ENCODE measurements at regions of chr6 and their contacts with region 1.

Region 1: GRCh38 chr6:26285143-26286134 is 79.6 kb upstream of the BTN3A2 start:
- DNase-seq: peak; percentile 94 to 100
- H3K4me3 ChIP-seq: peak overlapping the region; percentile 74 to 95 (median 80)
- H3K27ac ChIP-seq: peak overlapping the region; percentile 96
- H3K4me1 ChIP-seq: peaks cover 0 to 7% (median 2%) of the 10 kb centered on the region in 4 experiments; a peak in 1 of 7 replicates
- H3K27me3 ChIP-seq: no peaks in the 10 kb centered on the region
- CTCF ChIP-seq: no peak
- EP300 ChIP-seq: peak in 1 of 2 experiments; percentile 97; a peak in 2 of 3 replicates
- POLR2A ChIP-seq: peak; percentile 100
- RAD21 ChIP-seq: no peak

Region 2: DNA sequence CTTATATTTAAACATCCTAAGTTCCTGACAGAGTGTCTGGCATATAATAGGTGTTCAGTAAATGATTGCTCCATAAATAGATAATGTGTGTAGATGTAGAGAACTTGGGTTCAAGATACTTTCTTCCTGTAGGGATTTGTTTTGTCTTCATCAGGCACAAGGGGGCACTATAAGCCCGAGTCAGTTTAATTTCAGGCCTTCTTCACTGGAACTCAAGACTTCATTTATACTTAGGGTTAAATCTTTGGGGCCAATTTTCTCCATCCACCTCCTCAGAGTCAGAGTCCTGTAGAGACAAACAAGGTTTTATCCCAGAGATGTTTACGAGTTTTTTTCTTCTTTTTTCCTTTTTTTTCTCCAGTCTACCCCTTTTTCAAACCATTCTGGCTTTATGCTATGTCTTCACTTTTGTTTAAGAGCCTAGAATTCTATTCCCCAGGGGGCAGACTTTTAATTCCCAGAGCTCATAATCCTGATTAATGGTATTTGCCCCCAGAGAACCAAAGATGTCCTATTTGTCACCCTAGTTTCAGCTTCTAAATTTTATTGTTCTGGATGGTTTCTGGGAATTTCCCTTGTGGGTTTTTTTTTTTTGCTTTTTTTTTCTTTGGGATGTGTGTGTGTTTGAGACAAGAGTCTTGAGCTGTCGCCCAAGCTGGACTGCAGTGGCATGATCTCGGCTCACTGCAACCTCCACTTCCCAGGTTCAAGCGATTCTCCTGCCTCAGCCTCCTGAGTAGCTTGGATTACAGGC is 109.8 kb before region 1 on chr6:
- CTCF ChIA-PET with region 1: interaction called, 3 read pairs
- POLR2A ChIA-PET with region 1: interaction called, 12 read pairs
- DNase-seq: peak in 1 of 2 experiments; percentile 54
- H3K4me3 ChIP-seq: 0 out of 8 replicates have a peak overlapping the region, but pooled peaks of 1 of the 4 experiments have one; percentile 14
- H3K27ac ChIP-seq: no peak overlapping the region
- H3K4me1 ChIP-seq: peaks cover 0 to 2% (median 0%) of the 10 kb centered on the region in 4 experiments; a peak in 3 of 7 replicates
- H3K27me3 ChIP-seq: no peaks in the 10 kb centered on the region
- CTCF ChIP-seq: peak in 2 of 3 experiments; percentile 51 to 65; a peak in 2 of 4 replicates
- EP300 ChIP-seq: no peak
- POLR2A ChIP-seq: no peak
- RAD21 ChIP-seq: peak; percentile 79 to 83

Region 3: GRCh38 chr6:26216356-26216885 is 69.0 kb before region 1 on chr6:
- CTCF ChIA-PET with region 1: no interaction called
- POLR2A ChIA-PET with region 1: interaction called, 131 read pairs
- DNase-seq: no peak
- H3K4me3 ChIP-seq: peak overlapping the region; percentile 87 to 98 (median 90)
- H3K27ac ChIP-seq: peak overlapping the region; percentile 97
- H3K4me1 ChIP-seq: peaks cover 0 to 8% (median 1%) of the 10 kb centered on the region in 4 experiments; a peak in 4 of 7 replicates
- H3K27me3 ChIP-seq: no peaks in the 10 kb centered on the region
- CTCF ChIP-seq: no peak
- EP300 ChIP-seq: no peak
- POLR2A ChIP-seq: peak; percentile 96 to 98
- RAD21 ChIP-seq: no peak

Region 4: GRCh38 chr6:26270903-26271667 is 14.4 kb before region 1 on chr6:
- CTCF ChIA-PET with region 1: interaction called, 5 read pairs
- POLR2A ChIA-PET with region 1: interaction called, 758 read pairs
- DNase-seq: peak in 1 of 2 experiments; percentile 85
- H3K4me3 ChIP-seq: peak overlapping the region; percentile 73 to 97 (median 88)
- H3K27ac ChIP-seq: peak overlapping the region; percentile 93
- H3K4me1 ChIP-seq: peaks cover 0 to 10% (median 4%) of the 10 kb centered on the region in 4 experiments; a peak in 4 of 7 replicates
- H3K27me3 ChIP-seq: no peaks in the 10 kb centered on the region
- CTCF ChIP-seq: no peak
- EP300 ChIP-seq: no peak
- POLR2A ChIP-seq: peak; percentile 94 to 100
- RAD21 ChIP-seq: no peak

Region 5: GRCh38 chr6:26322645-26323482 is 37.4 kb after region 1 on chr6:
- CTCF ChIA-PET with region 1: no interaction called
- POLR2A ChIA-PET with region 1: interaction called, 37 read pairs
- DNase-seq: peak in 1 of 2 experiments; percentile 81
- H3K4me3 ChIP-seq: peak overlapping the region; percentile 70 to 89 (median 78)
- H3K27ac ChIP-seq: no peak overlapping the region
- H3K4me1 ChIP-seq: peaks cover 0 to 5% (median 2%) of the 10 kb centered on the region in 4 experiments; a peak in 3 of 7 replicates
- H3K27me3 ChIP-seq: peaks cover 0 to 4% (median 0%) of the 10 kb centered on the region in 4 experiments; a peak in 1 of 7 replicates
- CTCF ChIP-seq: no peak
- EP300 ChIP-seq: no peak
- POLR2A ChIP-seq: no peak
- RAD21 ChIP-seq: no peak

Region 6: DNA sequence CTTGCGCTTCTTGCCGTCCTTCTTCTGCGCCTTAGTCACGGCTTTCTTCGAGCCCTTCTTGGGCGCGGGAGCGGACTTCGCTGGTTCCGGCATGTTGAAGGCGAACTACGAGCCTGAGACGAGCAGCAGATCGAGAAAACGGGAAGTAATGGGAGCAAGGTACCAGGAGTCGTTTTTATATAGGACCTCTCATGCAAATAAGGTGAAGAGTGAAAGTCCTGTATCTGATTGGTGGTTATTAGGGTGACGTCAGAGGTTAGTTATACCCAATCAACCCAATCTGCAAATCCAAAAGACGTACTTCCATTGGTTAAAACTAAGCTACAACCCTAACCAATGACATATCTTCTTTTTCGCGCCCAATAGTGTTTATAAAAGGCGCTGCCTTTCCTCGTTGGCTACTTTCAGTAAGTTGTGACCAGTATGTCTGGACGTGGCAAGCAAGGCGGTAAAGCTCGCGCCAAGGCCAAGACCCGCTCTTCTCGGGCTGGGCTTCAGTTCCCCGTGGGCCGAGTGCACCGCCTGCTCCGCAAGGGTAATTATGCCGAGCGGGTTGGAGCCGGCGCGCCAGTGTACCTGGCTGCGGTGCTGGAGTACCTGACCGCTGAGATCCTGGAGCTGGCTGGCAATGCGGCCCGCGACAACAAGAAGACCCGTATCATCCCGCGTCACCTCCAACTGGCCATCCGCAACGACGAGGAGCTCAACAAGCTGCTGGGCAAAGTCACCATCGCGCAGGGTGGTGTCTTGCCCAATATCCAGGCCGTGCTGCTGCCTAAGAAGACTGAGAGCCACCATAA is 861.5 kb after region 1 on chr6:
- CTCF ChIA-PET with region 1: no interaction called
- POLR2A ChIA-PET with region 1: interaction called, 43 read pairs
- DNase-seq: peak; percentile 89 to 93
- H3K4me3 ChIP-seq: peak overlapping the region; percentile 60 to 86 (median 76)
- H3K27ac ChIP-seq: peak overlapping the region; percentile 98
- H3K4me1 ChIP-seq: peaks cover 0 to 11% (median 1%) of the 10 kb centered on the region in 4 experiments; a peak in 4 of 7 replicates
- H3K27me3 ChIP-seq: no peaks in the 10 kb centered on the region
- CTCF ChIP-seq: no peak
- EP300 ChIP-seq: 0 out of 3 replicates have a peak, but pooled peaks of 1 of the 2 experiments have one; percentile 16
- POLR2A ChIP-seq: peak; percentile 98 to 99
- RAD21 ChIP-seq: no peak

Measured in H1 (cell line).